Mammary epithelial cell (primary cell): ENCODE measurements at regions of chr14 and their contacts with region 1.

Region 1: DNA sequence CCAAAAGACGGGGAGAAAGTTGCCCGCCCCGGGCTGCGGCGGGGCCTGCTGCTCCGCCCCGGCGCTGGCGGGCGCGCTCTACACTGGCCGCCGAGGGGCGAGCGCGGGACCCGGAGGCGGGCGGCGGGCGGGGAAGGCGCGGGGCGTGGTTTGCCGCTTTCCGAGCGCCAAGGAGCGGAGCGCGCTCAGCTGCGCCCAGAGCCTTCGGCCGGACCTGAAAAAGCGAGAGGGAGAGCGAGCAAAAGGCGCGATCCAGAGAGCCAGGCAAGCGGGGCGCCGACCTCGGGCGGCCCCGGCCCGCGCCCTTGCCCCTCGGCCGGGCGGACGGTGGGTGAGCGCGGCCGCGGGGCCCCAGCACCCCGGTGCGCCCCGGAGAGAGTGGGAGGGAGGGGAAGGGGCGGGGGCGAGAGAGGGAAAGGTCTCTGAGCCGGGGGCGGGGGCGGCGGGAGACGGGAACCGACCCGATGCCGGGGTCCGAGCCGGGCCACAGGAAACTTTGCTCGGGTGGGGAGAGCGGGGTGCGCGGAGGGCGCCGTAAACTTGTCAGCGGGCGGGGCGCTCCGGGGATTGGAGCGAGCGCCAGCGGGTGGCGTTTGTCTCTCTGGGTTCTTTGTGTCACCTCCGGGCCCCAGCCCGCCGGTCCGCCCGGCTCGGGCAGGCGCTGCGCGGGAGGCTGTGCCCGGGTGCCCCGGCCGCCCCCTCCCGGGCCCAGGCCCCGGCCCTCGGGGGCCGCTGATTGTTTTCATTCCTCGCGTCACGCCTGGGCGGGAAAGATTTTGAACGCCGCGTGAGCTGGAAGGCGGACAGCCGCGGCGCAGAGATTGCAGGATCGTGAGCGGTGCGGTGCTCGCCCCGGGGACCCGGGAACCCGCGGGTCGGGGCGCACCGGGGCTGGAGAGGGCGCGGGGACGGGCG is at the start of gene SYNE2:
- DNase-seq: peak; percentile 74
- H3K4me3 ChIP-seq: peak within 1 kb of the TSS; percentile 56 to 70 (median 58)
- H3K27ac ChIP-seq: peak within 1 kb of the TSS; percentile 80
- H3K4me1 ChIP-seq: peaks cover 17% of the 10 kb centered on the region
- H3K27me3 ChIP-seq: no peaks in the 10 kb centered on the region
- CTCF ChIP-seq: peak in 1 of 2 donors; percentile 14
- total RNA-seq, gene SYNE2: 44.6 to 65.3 TPM

Region 2: GRCh38 chr14:63510538-63510937 is 342.5 kb before region 1 on chr14:
- CTCF ChIA-PET with region 1: no interaction called
- dilution Hi-C with region 1: no loop called
- in situ Hi-C with region 1: no loop called
- intact Hi-C with region 1: no loop called
- DNase-seq: no peak
- H3K4me3 ChIP-seq: no peak overlapping the region
- H3K27ac ChIP-seq: no peak overlapping the region
- H3K4me1 ChIP-seq: no peaks in the 10 kb centered on the region
- H3K27me3 ChIP-seq: no peaks in the 10 kb centered on the region
- CTCF ChIP-seq: no peak

Region 3: DNA sequence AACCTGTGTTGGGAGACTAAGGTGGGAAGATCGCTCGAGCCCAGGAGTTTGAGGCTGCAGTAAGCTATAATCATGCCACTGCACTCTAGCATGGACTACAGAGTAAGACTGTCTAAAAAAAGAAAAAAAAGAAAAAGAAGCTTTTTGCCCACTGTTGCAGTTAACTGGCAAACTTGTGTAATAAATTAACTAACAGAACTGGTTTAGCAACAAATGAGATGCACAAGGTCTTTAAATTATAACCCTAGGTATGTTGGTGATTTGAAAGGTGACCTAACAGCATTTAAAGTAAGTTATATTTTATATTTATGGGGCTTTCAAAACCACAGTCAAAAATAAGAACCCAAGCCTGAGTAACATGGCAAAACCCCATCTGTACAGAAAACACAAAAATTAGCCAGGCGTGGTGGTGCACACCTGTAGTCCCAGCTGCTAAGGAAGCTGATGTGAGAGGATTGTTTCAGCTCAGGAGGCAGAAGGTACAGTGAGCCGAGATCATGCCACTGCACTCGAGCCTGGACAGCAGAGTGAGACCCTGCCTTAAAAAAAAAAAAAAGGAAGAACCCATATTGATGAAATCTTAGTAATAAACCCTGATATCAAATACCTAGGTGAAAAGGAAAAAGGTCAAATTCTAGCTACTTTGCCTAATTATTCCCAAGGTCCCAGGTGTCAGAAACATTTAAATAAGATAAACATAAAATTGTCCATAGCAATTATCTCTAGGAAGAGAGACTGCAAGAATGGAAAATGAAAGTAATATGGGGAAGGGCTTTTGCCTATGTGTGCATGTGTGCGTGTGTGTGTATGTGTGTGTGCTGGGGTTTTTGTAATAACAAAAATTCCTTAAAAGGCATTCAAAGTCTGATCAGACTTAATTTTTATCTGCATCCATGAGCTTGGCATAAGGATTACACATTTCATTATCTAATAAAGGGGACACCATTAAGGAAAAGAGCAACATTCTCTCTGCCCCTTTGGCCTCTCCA is 15.2 kb after region 1 on chr14:
- CTCF ChIA-PET with region 1: no interaction called
- dilution Hi-C with region 1: no loop called
- in situ Hi-C with region 1: no loop called
- intact Hi-C with region 1: loop called (anchors 1 kb)
- DNase-seq: no peak
- H3K4me3 ChIP-seq: no peak overlapping the region
- H3K27ac ChIP-seq: no peak overlapping the region
- H3K4me1 ChIP-seq: peaks cover 13% of the 10 kb centered on the region
- H3K27me3 ChIP-seq: no peaks in the 10 kb centered on the region
- CTCF ChIP-seq: no peak

Region 4: GRCh38 chr14:63901434-63902085 is 48.5 kb after region 1 on chr14:
- CTCF ChIA-PET with region 1: no interaction called
- dilution Hi-C with region 1: no loop called
- in situ Hi-C with region 1: no loop called
- intact Hi-C with region 1: loop called (anchors 5 kb)
- DNase-seq: peak; percentile 69
- H3K4me3 ChIP-seq: no peak overlapping the region
- H3K27ac ChIP-seq: no peak overlapping the region
- H3K4me1 ChIP-seq: peaks cover 11% of the 10 kb centered on the region
- H3K27me3 ChIP-seq: no peaks in the 10 kb centered on the region
- CTCF ChIP-seq: no peak

Region 5: GRCh38 chr14:63922696-63923421 is 69.8 kb after region 1 on chr14:
- CTCF ChIA-PET with region 1: no interaction called
- dilution Hi-C with region 1: no loop called
- in situ Hi-C with region 1: no loop called
- intact Hi-C with region 1: loop called (anchors 2 kb)
- DNase-seq: peak; percentile 98
- H3K4me3 ChIP-seq: peak overlapping the region in 2 of 3 experiments; percentile 7 to 18
- H3K27ac ChIP-seq: peak overlapping the region; percentile 98
- H3K4me1 ChIP-seq: peaks cover 21% of the 10 kb centered on the region
- H3K27me3 ChIP-seq: no peaks in the 10 kb centered on the region
- CTCF ChIP-seq: no peak

Region 6: DNA sequence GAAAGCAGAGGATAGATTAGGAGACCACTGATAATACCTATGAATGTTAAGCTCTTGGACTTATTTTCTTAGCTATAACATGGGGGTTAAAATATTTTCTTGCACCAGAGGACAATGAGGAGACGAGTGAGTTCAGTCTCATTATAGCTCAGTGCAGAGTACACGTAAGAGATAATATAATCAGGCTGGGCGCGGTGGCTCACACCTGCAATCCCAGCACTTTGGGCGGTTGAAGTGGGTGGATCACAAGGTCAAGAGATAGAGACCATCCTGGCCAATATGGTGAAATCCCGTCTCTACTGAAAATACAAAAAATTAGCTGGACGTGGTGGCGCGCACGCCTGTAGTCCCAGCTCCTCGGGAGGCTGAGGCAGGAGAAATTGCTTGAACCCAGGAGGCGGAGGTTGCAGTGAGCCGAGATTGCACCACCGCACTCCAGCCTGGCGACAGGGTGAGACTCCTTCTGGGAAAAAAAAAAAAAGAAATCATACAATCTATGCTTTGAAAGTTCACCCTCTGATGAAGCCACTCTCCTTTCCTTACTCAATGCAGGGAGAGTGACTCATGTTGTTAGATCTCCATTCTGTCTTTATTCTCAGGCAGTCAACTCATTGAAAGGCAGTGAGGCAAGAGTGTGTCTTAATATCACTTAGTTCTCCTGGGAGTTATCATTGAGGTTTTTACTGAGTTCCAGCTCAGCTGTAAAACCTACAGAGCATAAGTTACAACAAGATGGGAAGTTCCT is 133.9 kb after region 1 on chr14:
- CTCF ChIA-PET with region 1: interaction called, 4 read pairs
- dilution Hi-C with region 1: no loop called
- in situ Hi-C with region 1: loop called (anchors 10 to 25 kb)
- intact Hi-C with region 1: no loop called
- DNase-seq: peak; percentile 89
- H3K4me3 ChIP-seq: no peak overlapping the region
- H3K27ac ChIP-seq: no peak overlapping the region
- H3K4me1 ChIP-seq: no peaks in the 10 kb centered on the region
- H3K27me3 ChIP-seq: no peaks in the 10 kb centered on the region
- CTCF ChIP-seq: no peak

Region 7: GRCh38 chr14:63993992-63994391 is 140.9 kb after region 1 on chr14:
- CTCF ChIA-PET with region 1: interaction called, 4 read pairs
- dilution Hi-C with region 1: no loop called
- in situ Hi-C with region 1: loop called (anchors 10 to 25 kb)
- intact Hi-C with region 1: loop called (anchors 1 kb)
- DNase-seq: peak; percentile 17
- H3K4me3 ChIP-seq: no peak overlapping the region
- H3K27ac ChIP-seq: no peak overlapping the region
- H3K4me1 ChIP-seq: peaks cover 13% of the 10 kb centered on the region
- H3K27me3 ChIP-seq: no peaks in the 10 kb centered on the region
- CTCF ChIP-seq: peak; percentile 16 to 47